CD8-positive, alpha-beta T cell (primary cell): ENCODE measurements at regions of chr6 and their contacts with region 1.

Region 1: GRCh38 chr6:131281471-131282270 is 146.4 kb downstream of the AKAP7 start:
- DNase-seq: peak; percentile 46 to 88 (median 72)
- ATAC-seq: peak; percentile 97
- H3K4me3 ChIP-seq: peak overlapping the region; percentile 23 to 33
- H3K4me3 Mint-ChIP-seq: peak overlapping the region; percentile 77
- H3K27ac ChIP-seq: peak overlapping the region; percentile 74 to 78
- H3K27ac Mint-ChIP-seq: peak overlapping the region; percentile 97
- H3K4me1 ChIP-seq: peaks cover 48% of the 10 kb centered on the region
- H3K4me1 Mint-ChIP-seq: peaks cover 66% of the 10 kb centered on the region
- H3K27me3 ChIP-seq: no peaks in the 10 kb centered on the region
- H3K27me3 Mint-ChIP-seq: no peaks in the 10 kb centered on the region
- CTCF ChIP-seq: no peak

Region 2: DNA sequence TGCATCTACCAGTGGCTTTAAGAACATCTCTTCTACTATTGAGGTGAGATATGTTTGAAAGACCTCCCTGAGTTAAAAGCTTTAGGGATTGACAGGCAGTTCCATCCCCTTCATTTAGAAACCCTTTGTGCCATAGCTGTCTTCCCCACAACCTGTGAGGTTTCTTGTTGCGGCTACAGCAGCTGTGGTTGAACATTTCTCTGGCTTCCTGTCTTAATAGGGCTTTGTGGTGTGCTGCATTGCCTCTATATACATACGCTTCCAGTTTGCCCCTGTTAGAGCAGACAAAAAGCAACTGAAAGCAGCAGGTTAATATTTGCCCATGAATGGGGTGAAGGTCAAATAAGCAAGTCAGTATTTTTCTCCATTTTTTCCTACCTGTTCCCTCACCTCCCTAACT is 705.7 kb before region 1 on chr6:
- CTCF ChIA-PET with region 1: no interaction called
- POLR2A ChIA-PET with region 1: no interaction called
- intact Hi-C with region 1: no loop called
- DNase-seq: peak; percentile 11 to 82 (median 53)
- ATAC-seq: peak; percentile 90
- H3K4me3 ChIP-seq: peak overlapping the region in 1 of 2 experiments; percentile 1
- H3K4me3 Mint-ChIP-seq: peak overlapping the region; percentile 51
- H3K27ac ChIP-seq: peak overlapping the region in 1 of 2 experiments; percentile 9
- H3K27ac Mint-ChIP-seq: peak overlapping the region; percentile 75
- H3K4me1 ChIP-seq: peaks cover 36% of the 10 kb centered on the region
- H3K4me1 Mint-ChIP-seq: peaks cover 53% of the 10 kb centered on the region
- H3K27me3 ChIP-seq: no peaks in the 10 kb centered on the region
- H3K27me3 Mint-ChIP-seq: no peaks in the 10 kb centered on the region
- CTCF ChIP-seq: no peak

Region 3: GRCh38 chr6:131213501-131213990 is 68.1 kb before region 1 on chr6:
- CTCF ChIA-PET with region 1: no interaction called
- POLR2A ChIA-PET with region 1: no interaction called
- intact Hi-C with region 1: loop called in 1 of 2 experiments (anchors 5 kb)
- DNase-seq: no peak
- ATAC-seq: peak; percentile 26
- H3K4me3 ChIP-seq: no peak overlapping the region
- H3K4me3 Mint-ChIP-seq: peak overlapping the region; percentile 35
- H3K27ac ChIP-seq: no peak overlapping the region
- H3K27ac Mint-ChIP-seq: peak overlapping the region; percentile 35
- H3K4me1 ChIP-seq: peaks cover 27% of the 10 kb centered on the region
- H3K4me1 Mint-ChIP-seq: peaks cover 52% of the 10 kb centered on the region
- H3K27me3 ChIP-seq: no peaks in the 10 kb centered on the region
- H3K27me3 Mint-ChIP-seq: no peaks in the 10 kb centered on the region
- CTCF ChIP-seq: no peak

Region 4: DNA sequence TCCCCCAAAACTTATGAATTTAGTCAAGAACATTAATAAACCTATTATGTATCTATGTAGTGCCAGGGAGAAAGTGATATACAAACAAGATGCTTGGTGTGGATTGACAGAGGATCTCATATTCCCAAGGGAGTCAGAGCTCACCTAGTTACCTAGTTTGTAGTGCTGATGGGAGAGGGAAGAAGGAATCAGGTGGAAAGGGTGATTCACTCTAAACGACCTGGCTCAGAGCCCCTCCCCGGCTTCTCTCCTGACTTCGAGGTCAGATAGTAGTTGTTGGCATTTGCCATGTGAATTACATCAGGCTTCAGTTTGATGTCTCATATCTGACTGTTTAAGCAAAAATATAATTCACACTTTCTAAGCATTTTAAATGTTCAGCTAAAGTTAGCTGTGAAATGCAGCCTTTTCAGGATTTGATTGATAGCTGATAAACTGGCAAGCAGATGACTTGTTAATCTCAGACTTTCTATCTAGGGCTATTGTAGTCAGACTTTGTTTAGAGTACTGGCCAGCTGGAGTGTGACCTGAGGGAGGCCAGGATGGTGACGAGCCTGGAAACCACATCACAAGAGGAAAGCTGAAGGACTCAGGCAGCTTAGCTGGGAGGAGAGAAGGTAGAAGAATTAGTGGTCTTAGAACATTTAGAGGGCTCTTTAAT is 22.7 kb before region 1 on chr6:
- CTCF ChIA-PET with region 1: interaction called, 5 read pairs
- POLR2A ChIA-PET with region 1: interaction called, 4 read pairs
- intact Hi-C with region 1: loop called in 1 of 2 experiments (anchors 2 kb)
- DNase-seq: no peak
- ATAC-seq: no peak
- H3K4me3 ChIP-seq: no peak overlapping the region
- H3K4me3 Mint-ChIP-seq: no peak overlapping the region
- H3K27ac ChIP-seq: no peak overlapping the region
- H3K27ac Mint-ChIP-seq: peak overlapping the region; percentile 60
- H3K4me1 ChIP-seq: peaks cover 12% of the 10 kb centered on the region
- H3K4me1 Mint-ChIP-seq: peaks cover 48% of the 10 kb centered on the region
- H3K27me3 ChIP-seq: no peaks in the 10 kb centered on the region
- H3K27me3 Mint-ChIP-seq: no peaks in the 10 kb centered on the region
- CTCF ChIP-seq: no peak

Region 5: GRCh38 chr6:131292145-131292938 is 10.7 kb after region 1 on chr6:
- CTCF ChIA-PET with region 1: interaction called, 6 read pairs
- POLR2A ChIA-PET with region 1: interaction called, 12 read pairs
- intact Hi-C with region 1: no loop called
- DNase-seq: no peak
- ATAC-seq: no peak
- H3K4me3 ChIP-seq: no peak overlapping the region
- H3K4me3 Mint-ChIP-seq: peak overlapping the region; percentile 43
- H3K27ac ChIP-seq: no peak overlapping the region
- H3K27ac Mint-ChIP-seq: peak overlapping the region; percentile 86
- H3K4me1 ChIP-seq: peaks cover 12% of the 10 kb centered on the region
- H3K4me1 Mint-ChIP-seq: peaks cover 28% of the 10 kb centered on the region
- H3K27me3 ChIP-seq: no peaks in the 10 kb centered on the region
- H3K27me3 Mint-ChIP-seq: no peaks in the 10 kb centered on the region
- CTCF ChIP-seq: no peak